ENCODE measurements at regions of chr2 and their contacts with region 1.

Region 1: GRCh38 chr2:70789304-70790135 is 923 bp downstream of the FIGLA start:
- DNase-seq: peak; percentile 56 to 61
- ATAC-seq: peak; percentile 70 to 90 (median 77)
- H3K4me3 ChIP-seq: peak overlapping the region in 9 of 10 donors; percentile 22 to 46 (median 41)
- H3K27ac ChIP-seq: no peak overlapping the region
- H3K4me1 ChIP-seq: peaks cover 2 to 26% (median 11%) of the 10 kb centered on the region in 9 donors
- H3K27me3 ChIP-seq: peaks cover 10 to 80% (median 70%) of the 10 kb centered on the region in 7 donors
- CTCF ChIP-seq: peak in 8 of 9 donors; percentile 30 to 76 (median 69)

Region 2: DNA sequence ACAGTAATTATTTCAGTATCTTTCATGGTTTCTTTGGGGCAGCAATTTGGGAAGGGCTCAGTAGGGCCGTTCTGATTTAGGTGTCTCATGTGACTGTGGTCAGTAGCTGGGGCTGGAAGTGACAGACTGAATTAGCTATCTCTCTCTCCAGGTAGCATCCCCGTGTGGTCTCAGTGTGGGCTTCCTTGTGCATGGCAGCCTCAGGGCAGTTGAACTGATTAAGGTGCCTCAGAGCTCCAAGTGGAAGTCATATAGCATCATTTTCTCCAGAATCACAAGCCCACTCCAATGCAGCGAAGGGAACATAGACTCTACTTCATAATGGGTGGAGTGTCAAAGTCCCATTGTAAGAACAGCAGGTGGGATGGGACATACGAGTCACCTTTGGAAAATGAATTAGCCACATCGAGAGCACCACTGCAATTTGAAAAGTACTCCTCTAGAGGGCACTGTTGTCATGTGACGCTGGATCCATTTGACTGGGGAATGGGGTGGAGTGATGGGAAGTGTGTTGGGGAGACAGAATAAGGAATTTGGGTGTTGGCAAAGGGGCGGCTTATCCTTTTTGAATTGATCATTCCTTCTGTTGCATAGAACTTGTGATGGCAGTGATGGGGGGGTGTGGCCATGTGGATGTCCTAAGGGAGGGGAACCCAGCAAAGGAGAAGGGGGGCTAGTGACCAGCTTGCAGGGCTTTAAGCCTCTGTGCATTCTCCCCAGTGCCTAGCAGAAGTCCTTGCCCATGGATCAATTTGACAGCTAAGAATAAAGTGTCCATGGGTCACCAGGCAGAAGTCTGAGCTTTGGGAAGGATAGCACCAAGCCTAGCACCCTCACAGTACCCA is 448.4 kb before region 1 on chr2:
- intact Hi-C with region 1: loop called in 1 of 10 experiments (anchors 10 kb)
- DNase-seq: peak in 1 of 2 donors; percentile 9
- ATAC-seq: peak in 7 of 8 donors; percentile 35 to 62 (median 45)
- H3K4me3 ChIP-seq: no peak overlapping the region
- H3K27ac ChIP-seq: no peak overlapping the region
- H3K4me1 ChIP-seq: no peaks in the 10 kb centered on the region
- H3K27me3 ChIP-seq: peaks cover 0 to 32% (median 16%) of the 10 kb centered on the region in 7 donors
- CTCF ChIP-seq: peak; percentile 46 to 87 (median 77)

Region 3: DNA sequence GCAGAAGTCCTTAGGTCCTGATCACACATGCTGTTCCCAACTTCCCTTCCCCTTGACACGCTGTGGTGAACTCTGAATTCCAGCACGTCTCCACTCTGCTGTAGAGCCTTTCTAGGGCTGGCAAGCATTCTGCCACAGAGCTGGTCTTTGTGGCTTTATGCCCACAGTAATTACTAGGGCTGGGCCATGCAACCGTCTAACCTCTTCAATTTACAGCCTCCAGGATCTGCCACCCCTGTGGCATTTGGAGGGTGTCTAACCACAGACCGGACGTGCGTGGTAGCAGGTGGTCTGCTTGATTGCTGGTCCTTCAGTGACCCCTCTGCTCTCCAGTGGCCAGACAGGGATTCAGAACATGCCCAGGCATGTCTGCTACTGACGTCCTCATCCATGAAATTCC is 192.8 kb before region 1 on chr2:
- intact Hi-C with region 1: no loop called
- DNase-seq: no peak
- ATAC-seq: peak in 1 of 8 donors; percentile 51
- H3K4me3 ChIP-seq: no peak overlapping the region
- H3K27ac ChIP-seq: no peak overlapping the region
- H3K4me1 ChIP-seq: no peaks in the 10 kb centered on the region
- H3K27me3 ChIP-seq: no peaks in the 10 kb centered on the region
- CTCF ChIP-seq: no peak

Region 4: GRCh38 chr2:70656421-70657010 is 133.0 kb before region 1 on chr2:
- intact Hi-C with region 1: loop called in 6 of 10 experiments (anchors 2 to 10 kb)
- DNase-seq: no peak
- ATAC-seq: no peak
- H3K4me3 ChIP-seq: no peak overlapping the region
- H3K27ac ChIP-seq: no peak overlapping the region
- H3K4me1 ChIP-seq: no peaks in the 10 kb centered on the region
- H3K27me3 ChIP-seq: peaks cover 0 to 52% (median 29%) of the 10 kb centered on the region in 7 donors
- CTCF ChIP-seq: no peak

Region 5: DNA sequence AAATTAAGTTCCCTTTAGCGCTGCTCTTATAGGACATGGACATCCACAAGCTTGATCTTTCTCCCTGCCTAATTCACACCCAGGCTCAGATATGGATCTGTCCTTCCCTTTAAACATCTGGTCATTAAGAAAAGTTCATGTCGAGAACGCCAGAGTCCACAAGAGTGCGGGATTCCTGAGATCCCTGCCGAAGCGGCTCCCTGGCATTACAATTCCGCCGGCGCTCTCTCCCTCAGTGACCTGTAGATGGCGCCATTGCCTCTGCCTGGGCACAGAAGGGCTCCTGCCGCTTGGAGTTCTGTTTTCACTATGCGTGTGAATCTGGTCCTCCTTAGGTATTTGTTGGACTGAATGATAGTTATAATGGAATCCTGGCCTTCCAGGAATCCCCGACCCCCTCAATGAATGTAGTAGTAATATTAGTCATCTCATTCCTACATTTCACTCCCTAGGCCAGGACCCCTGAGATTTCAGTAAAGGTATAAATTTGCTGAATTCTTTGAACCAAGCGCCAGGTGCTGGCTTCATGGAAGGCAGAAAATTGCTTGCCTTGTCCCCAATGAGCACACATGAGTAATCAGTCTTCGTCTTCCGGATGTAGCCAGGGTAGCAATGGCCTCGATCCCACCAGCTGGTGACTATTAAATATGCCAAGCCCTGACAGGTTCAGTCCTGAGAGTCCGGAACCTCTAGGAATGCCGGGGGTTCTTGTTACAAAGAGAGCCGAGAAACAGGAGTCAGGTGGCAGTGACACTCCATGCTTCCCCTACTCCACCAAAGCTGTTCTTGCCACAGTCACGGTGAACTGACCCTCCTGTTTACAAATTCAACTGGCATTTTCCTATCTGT is 72.5 kb after region 1 on chr2:
- intact Hi-C with region 1: loop called in 4 of 10 experiments (anchors 2 to 5 kb)
- DNase-seq: peak; percentile 76 to 84
- ATAC-seq: peak; percentile 78 to 92 (median 88)
- H3K4me3 ChIP-seq: no peak overlapping the region
- H3K27ac ChIP-seq: no peak overlapping the region
- H3K4me1 ChIP-seq: peaks cover 0 to 6% (median 0%) of the 10 kb centered on the region in 9 donors
- H3K27me3 ChIP-seq: peaks cover 0 to 59% (median 47%) of the 10 kb centered on the region in 7 donors
- CTCF ChIP-seq: peak; percentile 83 to 98 (median 97)

Region 6: GRCh38 chr2:70871398-70872211 is 82.1 kb after region 1 on chr2:
- intact Hi-C with region 1: loop called in 2 of 10 experiments (anchors 1 to 5 kb)
- DNase-seq: peak; percentile 86 to 90
- ATAC-seq: peak; percentile 94 to 98 (median 96)
- H3K4me3 ChIP-seq: peak overlapping the region in 2 of 10 donors; percentile 7 to 23
- H3K27ac ChIP-seq: no peak overlapping the region
- H3K4me1 ChIP-seq: peaks cover 0 to 14% (median 9%) of the 10 kb centered on the region in 9 donors
- H3K27me3 ChIP-seq: peaks cover 0 to 65% (median 60%) of the 10 kb centered on the region in 7 donors
- CTCF ChIP-seq: peak; percentile 90 to 94 (median 92)

Region 7: GRCh38 chr2:70919672-70920366 is 130.3 kb after region 1 on chr2:
- intact Hi-C with region 1: loop called in 1 of 10 experiments (anchors 10 kb)
- DNase-seq: peak; percentile 81 to 86
- ATAC-seq: peak; percentile 79 to 92 (median 84)
- H3K4me3 ChIP-seq: no peak overlapping the region
- H3K27ac ChIP-seq: no peak overlapping the region
- H3K4me1 ChIP-seq: peaks cover 0 to 11% (median 0%) of the 10 kb centered on the region in 9 donors
- H3K27me3 ChIP-seq: peaks cover 0 to 35% (median 12%) of the 10 kb centered on the region in 7 donors
- CTCF ChIP-seq: peak; percentile 67 to 94 (median 90)

Region 8: GRCh38 chr2:70948337-70949003 is 158.9 kb after region 1 on chr2:
- intact Hi-C with region 1: loop called in 8 of 10 experiments (anchors 2 to 10 kb)
- DNase-seq: peak; percentile 79 to 84
- ATAC-seq: peak; percentile 91 to 97 (median 94)
- H3K4me3 ChIP-seq: peak overlapping the region in 7 of 10 donors; percentile 25 to 49 (median 33)
- H3K27ac ChIP-seq: no peak overlapping the region
- H3K4me1 ChIP-seq: peaks cover 0 to 20% (median 0%) of the 10 kb centered on the region in 9 donors
- H3K27me3 ChIP-seq: peaks cover 0 to 55% (median 20%) of the 10 kb centered on the region in 7 donors
- CTCF ChIP-seq: peak; percentile 58 to 92 (median 89)

Measured in heart right ventricle (tissue), 16 donors.